ENCODE measurements at regions of chr3 and their contacts with region 1.

Region 1: GRCh38 chr3:48685602-48686511 is at the start of gene NCKIPSD:
- DNase-seq: peak; percentile 92
- H3K4me3 ChIP-seq: peak within 1 kb of the TSS; percentile 80
- H3K27ac ChIP-seq: peak within 1 kb of the TSS; percentile 86
- H3K4me1 ChIP-seq: peaks cover 19% of the 10 kb centered on the region
- H3K27me3 ChIP-seq: no peaks in the 10 kb centered on the region
- CTCF ChIP-seq: peak; percentile 71
- total RNA-seq, gene NCKIPSD: 24.3 to 29.7 TPM

Region 2: DNA sequence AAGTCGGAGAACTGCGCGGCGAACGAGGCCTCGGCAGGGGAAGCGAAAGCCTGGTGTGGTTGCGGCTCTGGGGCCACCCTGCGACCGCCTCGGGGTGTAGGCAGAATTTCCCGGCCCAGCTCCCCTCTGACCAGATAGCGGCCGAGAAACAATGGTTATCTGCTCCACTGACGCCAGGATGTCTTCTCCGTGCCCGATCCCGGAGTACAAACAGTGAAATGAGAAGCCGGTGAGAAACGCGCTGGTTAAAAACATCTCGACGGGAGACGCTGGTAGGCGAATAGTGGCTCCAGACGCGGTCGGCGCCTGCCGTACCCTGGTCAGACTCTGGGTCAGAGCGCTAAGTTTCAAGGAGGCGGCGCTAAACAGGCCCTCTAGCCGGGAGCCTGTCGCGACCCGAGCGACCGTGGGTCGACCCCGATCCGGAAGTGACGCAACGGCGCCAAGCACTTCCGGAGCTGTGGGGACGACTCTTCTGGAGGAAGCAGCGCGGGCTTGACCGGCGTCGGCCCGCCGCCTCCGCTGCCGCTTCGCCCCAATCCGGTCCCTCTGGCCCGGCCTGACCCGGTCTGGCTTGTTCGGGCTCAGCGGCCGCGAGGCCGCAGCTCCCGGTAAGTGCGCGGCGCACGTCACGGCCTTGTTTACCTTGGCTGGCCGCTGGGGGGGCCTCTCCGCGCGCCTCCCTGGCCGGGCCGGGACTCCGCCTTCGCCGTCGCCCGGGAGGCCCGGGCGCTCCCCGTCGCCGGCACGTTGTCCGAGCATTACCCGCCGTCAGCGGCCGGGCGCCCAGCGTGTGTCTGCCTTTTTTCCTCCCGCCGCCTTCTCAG is 232.7 kb after region 1 on chr3 and contains the start of gene ARIH2:
- intact Hi-C with region 1: loop called (anchors 10 kb)
- DNase-seq: peak; percentile 95
- H3K4me3 ChIP-seq: peak within 1 kb of the TSS; percentile 87
- H3K27ac ChIP-seq: peak within 1 kb of the TSS; percentile 98
- H3K4me1 ChIP-seq: no peaks in the 10 kb centered on the region
- H3K27me3 ChIP-seq: no peaks in the 10 kb centered on the region
- CTCF ChIP-seq: no peak
- total RNA-seq, gene ARIH2: 55.6 to 77.4 TPM